ENCODE measurements at regions of chr6 and their contacts with region 1.

Region 1: DNA sequence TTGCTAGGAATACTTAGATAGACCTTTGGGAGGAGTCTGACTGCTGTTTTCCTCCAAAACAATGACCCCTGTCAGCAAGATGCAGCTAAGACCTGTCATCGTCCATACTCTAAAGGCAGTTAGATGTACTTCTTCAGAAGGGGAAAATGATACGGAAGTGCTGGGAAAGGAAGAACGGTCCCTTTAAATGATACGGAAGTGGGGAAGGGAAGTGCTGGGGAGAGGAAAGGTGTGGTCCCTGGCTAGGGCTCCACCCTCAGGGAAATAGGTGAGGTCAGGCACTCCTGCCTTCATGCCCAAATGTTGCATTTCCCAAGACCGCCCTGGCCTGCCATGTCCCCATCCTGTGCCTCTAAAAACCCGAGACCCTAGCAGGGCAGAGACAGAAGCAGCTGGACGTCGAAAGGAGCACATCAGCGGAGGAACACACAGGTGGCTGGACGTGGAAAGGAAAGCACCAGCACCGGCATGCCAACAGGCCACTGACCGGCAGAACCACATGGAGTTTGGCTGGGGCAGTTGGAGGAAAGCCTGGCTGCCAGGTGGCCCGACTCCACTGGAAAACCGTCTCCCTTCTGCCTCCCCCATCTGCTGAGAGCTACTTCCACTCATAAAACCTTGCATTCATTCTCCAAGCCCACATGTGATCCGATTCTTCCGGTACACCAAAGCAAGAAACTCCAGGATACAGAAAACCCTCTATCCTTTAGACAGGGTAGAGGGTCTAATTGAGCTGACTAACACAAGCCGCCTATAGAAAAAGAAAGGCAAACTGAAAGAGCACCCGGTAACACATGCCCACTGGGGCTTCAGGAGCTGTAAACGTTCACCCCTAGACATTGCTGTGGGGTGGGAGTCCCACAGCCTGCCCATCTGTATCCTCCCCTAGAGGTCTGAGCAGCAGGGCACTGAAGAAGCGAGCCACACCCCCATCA is 94.6 kb downstream of the FAXC start:
- DNase-seq: no peak
- ATAC-seq: no peak
- H3K4me3 ChIP-seq: no peak overlapping the region
- H3K27ac ChIP-seq: no peak overlapping the region
- H3K4me1 ChIP-seq: no peaks in the 10 kb centered on the region
- H3K27me3 ChIP-seq: peaks cover 1 to 38% of the 10 kb centered on the region in 2 experiments
- CTCF ChIP-seq: no peak
- EP300 ChIP-seq: no peak
- POLR2A ChIP-seq: no peak
- RAD21 ChIP-seq: no peak

Region 2: GRCh38 chr6:99219788-99220187 is 35.1 kb before region 1 on chr6:
- CTCF ChIA-PET with region 1: no interaction called
- POLR2A ChIA-PET with region 1: no interaction called
- in situ Hi-C with region 1: no loop called
- intact Hi-C with region 1: loop called (anchors 1 kb)
- DNase-seq: no peak
- ATAC-seq: peak; percentile 83
- H3K4me3 ChIP-seq: no peak overlapping the region
- H3K27ac ChIP-seq: no peak overlapping the region
- H3K4me1 ChIP-seq: no peaks in the 10 kb centered on the region
- H3K27me3 ChIP-seq: no peaks in the 10 kb centered on the region
- CTCF ChIP-seq: peak; percentile 19
- EP300 ChIP-seq: no peak
- POLR2A ChIP-seq: no peak
- RAD21 ChIP-seq: no peak